IMR-90 (cell line): ENCODE measurements at regions of chr22 and their contacts with region 1.

Region 1: DNA sequence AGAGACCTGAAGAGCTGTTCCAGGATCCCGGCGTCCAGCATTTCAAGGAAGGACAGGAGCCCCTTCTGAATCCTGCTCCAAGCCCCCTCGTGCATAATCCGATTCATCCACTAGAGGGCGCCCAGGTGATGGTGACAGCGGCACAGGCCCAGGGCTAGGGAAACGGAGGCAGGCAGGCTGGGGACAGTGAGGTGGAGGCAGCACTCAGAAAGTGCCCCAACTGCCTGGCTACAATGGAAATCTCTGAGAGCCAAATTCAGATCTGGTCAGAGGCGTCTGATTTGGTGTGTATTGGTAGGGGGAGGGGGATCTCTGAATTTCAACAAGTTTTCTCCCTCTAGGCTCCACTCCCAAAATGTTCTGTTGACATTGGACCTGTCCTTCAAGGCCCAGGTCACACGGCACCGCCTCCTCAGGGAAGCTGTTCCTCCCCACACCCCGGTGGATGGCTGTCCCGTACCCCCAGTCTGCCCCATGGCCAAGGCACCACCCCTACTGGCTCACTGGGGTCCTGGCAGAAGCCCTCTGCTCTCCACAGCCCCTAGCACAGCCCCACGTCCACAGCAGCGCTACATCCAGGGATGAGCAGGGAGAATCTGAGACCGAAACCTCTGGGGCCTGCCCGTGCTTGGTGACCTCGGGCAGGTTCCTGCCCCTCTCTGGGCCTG is 142.9 kb downstream of the CRYBB2 start:
- DNase-seq: peak; percentile 38
- ATAC-seq: peak; percentile 84
- H3K4me3 ChIP-seq: no peak overlapping the region
- H3K27ac ChIP-seq: no peak overlapping the region
- H3K4me1 ChIP-seq: peaks cover 9% of the 10 kb centered on the region; the same call in 1 of the 2 replicates
- H3K27me3 ChIP-seq: no peaks in the 10 kb centered on the region
- CTCF ChIP-seq: peak; percentile 88
- POLR2A ChIP-seq: no peak
- RAD21 ChIP-seq: peak; percentile 87

Region 2: GRCh38 chr22:25403811-25404471 is 41.6 kb after region 1 on chr22:
- CTCF ChIA-PET with region 1: interaction called, 5 read pairs
- POLR2A ChIA-PET with region 1: no interaction called
- dilution Hi-C with region 1: no loop called
- in situ Hi-C with region 1: no loop called
- intact Hi-C with region 1: loop called (anchors 2 kb)
- DNase-seq: peak; percentile 41
- ATAC-seq: peak; percentile 4
- H3K4me3 ChIP-seq: peak overlapping the region; percentile 93
- H3K27ac ChIP-seq: peak overlapping the region; percentile 61
- H3K4me1 ChIP-seq: peaks cover 30% of the 10 kb centered on the region
- H3K27me3 ChIP-seq: no peaks in the 10 kb centered on the region
- CTCF ChIP-seq: no peak
- POLR2A ChIP-seq: no peak
- RAD21 ChIP-seq: no peak

Region 3: DNA sequence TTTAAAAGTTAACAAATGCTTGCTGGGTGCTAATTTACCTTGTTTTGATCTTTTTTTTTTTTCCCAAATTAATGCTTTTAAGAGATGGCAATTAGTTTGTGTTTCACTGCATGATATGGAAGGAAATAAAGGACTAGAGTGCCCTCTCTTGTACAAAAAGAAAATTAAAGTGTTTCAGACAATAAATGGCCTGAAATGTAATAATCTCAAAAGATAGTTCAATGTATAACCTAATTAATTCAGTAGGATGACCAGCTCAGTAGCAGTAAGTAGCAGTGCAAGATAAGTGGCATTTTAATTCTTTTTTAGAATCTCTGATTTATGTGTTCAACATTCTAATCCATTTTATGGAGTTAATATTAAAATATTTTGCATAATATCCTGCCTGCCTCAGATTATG is 339.7 kb after region 1 on chr22:
- CTCF ChIA-PET with region 1: interaction called, 3 read pairs
- POLR2A ChIA-PET with region 1: no interaction called
- dilution Hi-C with region 1: no loop called
- in situ Hi-C with region 1: no loop called
- intact Hi-C with region 1: loop called (anchors 2 kb)
- DNase-seq: peak; percentile 29
- ATAC-seq: peak; percentile 56; the same call in 1 of the 2 replicates
- H3K4me3 ChIP-seq: no peak overlapping the region
- H3K27ac ChIP-seq: no peak overlapping the region
- H3K4me1 ChIP-seq: no peaks in the 10 kb centered on the region
- H3K27me3 ChIP-seq: no peaks in the 10 kb centered on the region
- CTCF ChIP-seq: peak; percentile 62
- POLR2A ChIP-seq: no peak
- RAD21 ChIP-seq: peak; percentile 68

Region 4: DNA sequence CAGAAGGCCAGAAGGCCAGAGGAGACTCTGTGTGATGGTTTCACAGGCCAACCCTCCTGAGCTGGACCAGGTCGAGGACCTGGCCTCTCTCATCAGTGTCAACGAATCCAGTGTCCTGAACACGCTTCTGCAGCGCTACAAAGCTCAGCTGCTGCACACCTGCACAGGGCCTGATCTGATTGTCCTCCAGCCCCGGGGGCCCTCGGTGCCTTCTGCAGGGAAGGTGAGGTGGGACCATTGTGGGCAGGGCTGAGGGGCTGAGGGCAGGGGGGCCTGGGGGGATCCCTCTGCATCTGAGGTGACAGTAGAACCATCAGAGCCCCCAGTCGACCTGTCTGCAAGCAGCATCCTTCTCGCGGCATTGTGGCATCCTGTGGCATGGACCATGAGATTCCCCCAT is 409.9 kb after region 1 on chr22:
- CTCF ChIA-PET with region 1: no interaction called
- POLR2A ChIA-PET with region 1: no interaction called
- dilution Hi-C with region 1: no loop called
- in situ Hi-C with region 1: no loop called
- intact Hi-C with region 1: loop called (anchors 2 kb)
- DNase-seq: no peak
- ATAC-seq: no peak
- H3K4me3 ChIP-seq: no peak overlapping the region
- H3K27ac ChIP-seq: no peak overlapping the region
- H3K4me1 ChIP-seq: no peaks in the 10 kb centered on the region
- H3K27me3 ChIP-seq: peaks cover 5% of the 10 kb centered on the region; the same call in 1 of the 2 replicates
- CTCF ChIP-seq: no peak
- POLR2A ChIP-seq: no peak
- RAD21 ChIP-seq: no peak